ENCODE measurements at regions of chr1 and their contacts with region 1.

Region 1: GRCh38 chr1:12619792-12620487 is 1.9 kb upstream of the DHRS3 start:
- DNase-seq: no peak
- H3K4me3 ChIP-seq: peak overlapping the region; percentile 87 to 90
- H3K27ac ChIP-seq: peak overlapping the region; percentile 95
- H3K4me1 ChIP-seq: peaks cover 47% of the 10 kb centered on the region
- H3K27me3 ChIP-seq: no peaks in the 10 kb centered on the region
- CTCF ChIP-seq: peak; percentile 85 to 98 (median 88)
- POLR2A ChIP-seq: no peak

Region 2: DNA sequence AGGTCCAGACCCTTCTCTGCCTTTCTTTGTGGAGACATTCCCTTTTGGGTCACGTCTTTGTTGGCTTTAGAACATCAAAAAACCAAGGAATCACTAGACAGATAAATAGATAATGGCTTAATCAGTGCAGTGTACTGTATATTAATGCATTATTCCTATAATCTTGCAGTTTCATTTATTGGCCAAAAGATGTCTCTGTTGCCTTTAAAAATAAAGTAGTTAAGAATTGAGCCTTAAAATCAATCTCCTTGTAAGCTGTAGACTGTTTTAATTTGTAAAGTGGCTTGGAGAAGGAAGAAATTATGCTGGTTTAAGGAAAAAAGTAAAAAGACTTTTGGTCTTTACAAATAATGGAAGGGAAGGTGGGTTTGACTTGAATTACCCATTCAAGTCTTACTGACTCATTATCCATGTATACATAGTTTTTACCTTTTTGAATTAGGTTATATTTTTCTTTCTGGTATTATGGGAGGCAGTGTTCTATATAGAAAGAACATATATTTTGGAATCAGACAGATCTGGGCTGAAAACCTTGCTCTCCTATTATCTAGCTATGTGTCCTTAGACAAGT is 305.5 kb before region 1 on chr1:
- intact Hi-C with region 1: loop called (anchors 10 kb)
- DNase-seq: no peak
- H3K4me3 ChIP-seq: no peak overlapping the region
- H3K27ac ChIP-seq: peak overlapping the region; percentile 62
- H3K4me1 ChIP-seq: peaks cover 27% of the 10 kb centered on the region
- H3K27me3 ChIP-seq: no peaks in the 10 kb centered on the region
- CTCF ChIP-seq: peak in 1 of 3 experiments; percentile 41
- POLR2A ChIP-seq: no peak

Region 3: DNA sequence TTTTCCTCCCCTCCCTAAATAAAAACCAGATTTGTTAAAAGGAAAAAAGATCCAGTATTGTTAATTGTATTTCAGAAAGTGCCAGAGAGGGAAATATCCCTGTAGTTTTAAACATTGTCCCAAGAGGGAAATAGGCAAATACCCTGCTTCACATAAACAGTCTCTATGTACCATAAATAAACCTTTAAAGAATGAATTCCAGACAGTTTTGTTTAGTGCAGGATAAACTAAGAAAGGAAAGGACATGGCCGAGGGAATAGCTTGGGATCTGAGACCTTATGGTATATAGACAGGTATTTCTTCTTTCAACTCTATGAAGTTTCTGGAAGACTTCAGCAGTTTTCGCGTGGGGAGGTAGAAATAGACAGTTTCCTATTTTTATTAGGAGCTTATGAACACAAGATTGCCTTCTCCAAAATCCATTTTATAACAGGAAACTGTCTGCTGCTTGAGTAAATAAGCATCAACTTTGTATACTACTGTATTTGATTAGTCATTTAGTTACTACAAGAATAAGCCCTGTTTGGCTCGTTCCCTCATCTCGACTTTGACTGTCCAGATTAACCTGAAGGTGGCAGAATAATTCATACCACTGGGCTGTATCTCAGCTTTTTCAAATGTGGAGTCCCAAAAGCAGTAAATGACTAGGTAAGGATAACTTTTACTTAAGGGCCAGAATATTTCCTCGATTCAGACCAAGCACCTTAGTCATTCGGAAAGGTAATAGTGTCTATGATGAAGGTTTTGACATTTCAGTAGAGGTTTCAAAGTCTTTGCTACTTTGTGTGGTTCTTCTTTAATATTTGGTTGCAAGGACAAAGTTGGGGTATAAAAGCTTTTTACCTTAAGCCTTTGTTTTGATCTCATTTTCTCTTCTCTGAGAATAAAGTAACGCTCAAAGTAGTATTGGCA is 212.6 kb before region 1 on chr1:
- intact Hi-C with region 1: loop called (anchors 5 kb)
- DNase-seq: no peak
- H3K4me3 ChIP-seq: no peak overlapping the region
- H3K27ac ChIP-seq: peak overlapping the region; percentile 65
- H3K4me1 ChIP-seq: peaks cover 47% of the 10 kb centered on the region
- H3K27me3 ChIP-seq: no peaks in the 10 kb centered on the region
- CTCF ChIP-seq: peak in 1 of 3 experiments; percentile 14
- POLR2A ChIP-seq: no peak

Region 4: GRCh38 chr1:12448746-12449177 is 171.2 kb before region 1 on chr1:
- intact Hi-C with region 1: loop called (anchors 5 kb)
- DNase-seq: no peak
- H3K4me3 ChIP-seq: no peak overlapping the region
- H3K27ac ChIP-seq: peak overlapping the region; percentile 83
- H3K4me1 ChIP-seq: peaks cover 86% of the 10 kb centered on the region
- H3K27me3 ChIP-seq: no peaks in the 10 kb centered on the region
- CTCF ChIP-seq: no peak
- POLR2A ChIP-seq: no peak

Region 5: GRCh38 chr1:12480748-12481362 is 139.1 kb before region 1 on chr1:
- intact Hi-C with region 1: loop called (anchors 10 kb)
- DNase-seq: no peak
- H3K4me3 ChIP-seq: no peak overlapping the region
- H3K27ac ChIP-seq: peak overlapping the region; percentile 76
- H3K4me1 ChIP-seq: peaks cover 78% of the 10 kb centered on the region
- H3K27me3 ChIP-seq: no peaks in the 10 kb centered on the region
- CTCF ChIP-seq: no peak
- POLR2A ChIP-seq: no peak

Region 6: GRCh38 chr1:12539705-12540579 is 80.0 kb before region 1 on chr1:
- intact Hi-C with region 1: loop called (anchors 2 kb)
- DNase-seq: no peak
- H3K4me3 ChIP-seq: peak overlapping the region in 1 of 2 donors; percentile 28
- H3K27ac ChIP-seq: peak overlapping the region; percentile 76
- H3K4me1 ChIP-seq: peaks cover 25% of the 10 kb centered on the region
- H3K27me3 ChIP-seq: no peaks in the 10 kb centered on the region
- CTCF ChIP-seq: no peak
- POLR2A ChIP-seq: no peak